ENCODE measurements at regions of chrX and their contacts with region 1.

Region 1: GRCh38 chrX:118807151-118808017 is 16.2 kb upstream of the ZCCHC12 start:
- DNase-seq: peak; percentile 15
- ATAC-seq: peak; percentile 88
- H3K4me3 ChIP-seq: no peak overlapping the region
- H3K27ac ChIP-seq: no peak overlapping the region
- H3K4me1 ChIP-seq: no peaks in the 10 kb centered on the region
- H3K27me3 ChIP-seq: no peaks in the 10 kb centered on the region; a peak in 1 of 4 replicates
- CTCF ChIP-seq: peak; percentile 56 to 78 (median 65)
- EP300 ChIP-seq: no peak
- POLR2A ChIP-seq: no peak
- RAD21 ChIP-seq: peak; percentile 86

Region 2: DNA sequence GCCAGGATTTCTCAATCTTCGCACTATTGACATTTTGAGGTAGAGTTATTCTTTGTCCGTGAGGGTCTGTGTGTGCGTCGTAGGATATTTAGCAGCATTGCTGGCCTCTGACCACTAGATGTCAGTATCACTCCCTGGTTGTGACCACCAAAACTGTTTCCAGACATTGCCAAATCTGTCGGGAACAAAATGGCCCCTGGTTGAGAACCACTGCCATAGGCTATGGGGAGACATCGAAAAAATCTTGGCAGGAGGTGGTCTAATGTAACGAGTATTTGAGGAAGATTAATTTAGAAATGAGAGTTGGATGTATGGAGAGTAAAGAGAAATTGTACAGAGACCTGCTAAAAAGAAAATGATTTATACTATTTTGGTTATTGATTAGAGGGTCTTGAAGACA is 203.4 kb before region 1 on chrX:
- CTCF ChIA-PET with region 1: interaction called, 23 read pairs
- POLR2A ChIA-PET with region 1: no interaction called
- RAD21 ChIA-PET with region 1: interaction called, 19 read pairs
- SMC1A ChIA-PET with region 1: interaction called, 10 read pairs
- in situ Hi-C with region 1: loop called (anchors 5 kb)
- intact Hi-C with region 1: loop called (anchors 1 kb)
- DNase-seq: peak; percentile 11
- ATAC-seq: peak; percentile 86
- H3K4me3 ChIP-seq: no peak overlapping the region
- H3K27ac ChIP-seq: no peak overlapping the region
- H3K4me1 ChIP-seq: no peaks in the 10 kb centered on the region
- H3K27me3 ChIP-seq: no peaks in the 10 kb centered on the region
- CTCF ChIP-seq: peak; percentile 81 to 85 (median 82)
- EP300 ChIP-seq: no peak
- POLR2A ChIP-seq: no peak
- RAD21 ChIP-seq: peak; percentile 74

Region 3: DNA sequence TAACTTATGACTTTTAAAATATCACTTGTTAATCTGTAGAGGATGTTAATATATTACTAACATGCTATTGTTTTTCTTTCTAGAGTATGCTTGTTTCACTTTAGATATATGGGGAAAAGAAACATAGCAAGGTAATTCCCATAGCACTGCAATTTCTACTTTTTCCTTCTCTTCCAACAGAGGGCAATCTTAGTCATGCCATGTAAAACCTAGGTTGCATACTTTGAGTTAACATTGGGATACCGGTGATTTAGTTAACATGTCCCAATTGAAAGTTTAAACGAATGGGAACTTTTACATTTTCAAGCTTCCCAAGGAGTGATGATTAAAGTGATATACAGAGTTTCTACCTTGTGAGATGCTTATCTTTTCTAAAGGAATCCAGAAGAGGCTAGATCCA is 169.4 kb before region 1 on chrX:
- CTCF ChIA-PET with region 1: interaction called, 22 read pairs
- POLR2A ChIA-PET with region 1: no interaction called
- RAD21 ChIA-PET with region 1: interaction called, 3 read pairs
- SMC1A ChIA-PET with region 1: interaction called, 29 read pairs
- in situ Hi-C with region 1: loop called (anchors 10 kb)
- intact Hi-C with region 1: no loop called
- DNase-seq: no peak
- ATAC-seq: no peak
- H3K4me3 ChIP-seq: no peak overlapping the region
- H3K27ac ChIP-seq: no peak overlapping the region
- H3K4me1 ChIP-seq: peaks cover 5% of the 10 kb centered on the region
- H3K27me3 ChIP-seq: no peaks in the 10 kb centered on the region
- CTCF ChIP-seq: peak in 1 of 3 experiments; percentile 18; a peak in 1 of 6 replicates
- EP300 ChIP-seq: no peak
- POLR2A ChIP-seq: no peak
- RAD21 ChIP-seq: no peak

Region 4: GRCh38 chrX:118702741-118703140 is 104.6 kb before region 1 on chrX:
- CTCF ChIA-PET with region 1: no interaction called
- POLR2A ChIA-PET with region 1: no interaction called
- RAD21 ChIA-PET with region 1: no interaction called
- SMC1A ChIA-PET with region 1: no interaction called
- in situ Hi-C with region 1: no loop called
- intact Hi-C with region 1: loop called (anchors 5 kb)
- DNase-seq: no peak
- ATAC-seq: peak; percentile 89
- H3K4me3 ChIP-seq: no peak overlapping the region
- H3K27ac ChIP-seq: no peak overlapping the region
- H3K4me1 ChIP-seq: no peaks in the 10 kb centered on the region
- H3K27me3 ChIP-seq: no peaks in the 10 kb centered on the region
- CTCF ChIP-seq: no peak
- EP300 ChIP-seq: no peak
- POLR2A ChIP-seq: no peak
- RAD21 ChIP-seq: no peak

Region 5: GRCh38 chrX:118761939-118762707 is 45.3 kb before region 1 on chrX:
- CTCF ChIA-PET with region 1: interaction called, 21 read pairs
- POLR2A ChIA-PET with region 1: no interaction called
- RAD21 ChIA-PET with region 1: interaction called, 3 read pairs
- SMC1A ChIA-PET with region 1: interaction called, 4 read pairs
- in situ Hi-C with region 1: no loop called
- intact Hi-C with region 1: loop called (anchors 1 kb)
- DNase-seq: no peak
- ATAC-seq: peak; percentile 52; the same call in 2 of the 3 replicates
- H3K4me3 ChIP-seq: no peak overlapping the region
- H3K27ac ChIP-seq: no peak overlapping the region
- H3K4me1 ChIP-seq: no peaks in the 10 kb centered on the region
- H3K27me3 ChIP-seq: no peaks in the 10 kb centered on the region
- CTCF ChIP-seq: peak in 2 of 3 experiments; percentile 9 to 32; a peak in 2 of 6 replicates
- EP300 ChIP-seq: no peak
- POLR2A ChIP-seq: no peak
- RAD21 ChIP-seq: peak; percentile 41

Measured in GM12878 (cell line).